AG04450 (cell line): ENCODE measurements at regions of chr9 and their contacts with region 1.

Region 1: GRCh38 chr9:78101247-78101646 is 69.6 kb upstream of the GNAQ start:
- DNase-seq: no peak
- H3K4me3 ChIP-seq: no peak overlapping the region
- H3K27ac ChIP-seq: no peak overlapping the region
- H3K27me3 ChIP-seq: peaks cover 2% of the 10 kb centered on the region
- CTCF ChIP-seq: no peak

Region 2: DNA sequence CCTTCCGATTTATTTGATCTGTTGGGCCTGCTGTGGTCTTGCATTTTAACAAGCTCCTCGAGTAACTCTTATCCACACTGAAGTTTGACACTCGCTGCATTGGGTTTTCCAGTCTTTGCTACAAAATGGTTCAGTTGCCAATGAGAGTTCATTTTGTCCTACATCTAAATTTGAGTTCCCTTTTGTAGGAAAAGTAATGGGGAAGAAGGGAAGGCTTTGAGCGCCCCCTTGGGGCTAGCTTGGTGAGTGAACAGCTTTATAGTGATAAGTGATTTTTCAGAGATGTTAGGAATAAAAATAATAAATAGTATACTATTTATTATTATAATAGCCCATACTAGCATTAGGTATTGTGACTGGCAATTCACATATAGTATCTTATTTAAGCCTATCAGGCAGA is 20.2 kb after region 1 on chr9:
- CTCF ChIA-PET with region 1: interaction called, 11 read pairs
- POLR2A ChIA-PET with region 1: no interaction called
- DNase-seq: peak; percentile 20
- H3K4me3 ChIP-seq: no peak overlapping the region
- H3K27ac ChIP-seq: no peak overlapping the region
- H3K27me3 ChIP-seq: no peaks in the 10 kb centered on the region
- CTCF ChIP-seq: peak; percentile 84